Activated CD4-positive, alpha-beta memory T cell treated with anti-CD3 and anti-CD28 coated beads for 36 hours (primary cell): ENCODE measurements at regions of chr15 and their contacts with region 1.

Region 1: DNA sequence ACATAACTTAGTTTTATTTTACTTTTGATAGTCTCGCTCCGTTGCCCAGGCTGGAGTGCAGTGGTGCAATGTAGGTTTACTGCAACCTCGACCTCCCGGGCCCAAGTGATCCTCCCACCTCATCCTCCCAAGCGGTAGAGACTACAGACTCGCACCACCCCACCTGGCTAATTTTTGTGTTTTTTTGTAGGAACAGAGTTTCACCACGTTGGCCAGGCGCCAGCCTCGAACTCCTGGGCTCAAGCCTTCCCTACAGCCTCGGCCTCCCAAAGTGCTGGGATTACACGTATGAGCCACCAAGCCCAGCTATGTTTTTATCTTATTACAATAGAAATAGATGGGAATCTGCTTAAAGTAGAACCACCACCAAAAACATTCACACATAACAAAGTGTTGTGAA is 2.9 kb downstream of the RNU5A-1 start:
- DNase-seq: no peak
- H3K4me3 Mint-ChIP-seq: peak overlapping the region; percentile 60
- H3K27ac Mint-ChIP-seq: peak overlapping the region; percentile 81
- H3K4me1 Mint-ChIP-seq: peaks cover 25% of the 10 kb centered on the region
- H3K27me3 Mint-ChIP-seq: peaks cover 5% of the 10 kb centered on the region

Region 2: DNA sequence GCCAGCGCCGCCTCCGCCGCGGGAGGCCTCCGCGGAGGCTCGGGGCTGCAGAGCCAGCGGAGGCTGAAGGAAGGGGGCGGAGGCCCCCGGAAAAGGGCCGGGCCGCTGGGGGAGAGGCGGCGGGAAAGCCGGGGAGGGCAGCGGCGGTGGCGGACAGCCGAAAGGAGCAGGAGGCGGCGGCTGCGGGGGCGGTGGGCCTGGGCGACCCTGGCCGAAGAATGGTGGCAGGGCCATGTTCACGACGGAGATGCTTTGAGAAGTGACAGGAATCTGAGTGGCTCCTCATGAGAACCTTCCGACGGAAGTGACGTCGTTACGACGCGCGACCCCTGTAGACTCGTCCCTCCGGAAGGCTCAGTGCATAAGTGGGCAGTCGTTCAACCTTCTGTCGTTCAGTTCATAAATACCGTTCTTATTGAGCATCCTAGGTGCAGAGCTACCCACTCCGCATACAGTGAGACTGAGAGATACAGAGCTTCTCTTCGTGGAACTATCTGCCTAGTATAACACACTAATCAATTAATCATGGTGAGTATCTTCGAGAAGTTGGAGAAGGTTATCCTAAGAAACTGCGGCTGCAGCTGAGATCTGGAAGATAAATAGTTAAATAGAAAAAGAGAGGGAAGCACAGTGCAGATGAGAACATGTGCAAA is 165.1 kb before region 1 on chr15 and contains the start of gene PDCD7:
- CTCF ChIA-PET with region 1: interaction called, 4 read pairs
- POLR2A ChIA-PET with region 1: no interaction called
- intact Hi-C with region 1: loop called (anchors 5 kb)
- DNase-seq: peak; percentile 91
- H3K4me3 Mint-ChIP-seq: peak within 1 kb of the TSS; percentile 98
- H3K27ac Mint-ChIP-seq: peak within 1 kb of the TSS; percentile 95
- H3K4me1 Mint-ChIP-seq: peaks cover 28% of the 10 kb centered on the region
- H3K27me3 Mint-ChIP-seq: no peaks in the 10 kb centered on the region
- total RNA-seq, gene PDCD7: 32.8 to 33.0 TPM

Region 3: GRCh38 chr15:65264863-65265430 is 33.8 kb before region 1 on chr15:
- CTCF ChIA-PET with region 1: no interaction called
- POLR2A ChIA-PET with region 1: no interaction called
- intact Hi-C with region 1: no loop called
- DNase-seq: no peak
- H3K4me3 Mint-ChIP-seq: no peak overlapping the region
- H3K27ac Mint-ChIP-seq: no peak overlapping the region
- H3K4me1 Mint-ChIP-seq: no peaks in the 10 kb centered on the region
- H3K27me3 Mint-ChIP-seq: no peaks in the 10 kb centered on the region

Region 4: DNA sequence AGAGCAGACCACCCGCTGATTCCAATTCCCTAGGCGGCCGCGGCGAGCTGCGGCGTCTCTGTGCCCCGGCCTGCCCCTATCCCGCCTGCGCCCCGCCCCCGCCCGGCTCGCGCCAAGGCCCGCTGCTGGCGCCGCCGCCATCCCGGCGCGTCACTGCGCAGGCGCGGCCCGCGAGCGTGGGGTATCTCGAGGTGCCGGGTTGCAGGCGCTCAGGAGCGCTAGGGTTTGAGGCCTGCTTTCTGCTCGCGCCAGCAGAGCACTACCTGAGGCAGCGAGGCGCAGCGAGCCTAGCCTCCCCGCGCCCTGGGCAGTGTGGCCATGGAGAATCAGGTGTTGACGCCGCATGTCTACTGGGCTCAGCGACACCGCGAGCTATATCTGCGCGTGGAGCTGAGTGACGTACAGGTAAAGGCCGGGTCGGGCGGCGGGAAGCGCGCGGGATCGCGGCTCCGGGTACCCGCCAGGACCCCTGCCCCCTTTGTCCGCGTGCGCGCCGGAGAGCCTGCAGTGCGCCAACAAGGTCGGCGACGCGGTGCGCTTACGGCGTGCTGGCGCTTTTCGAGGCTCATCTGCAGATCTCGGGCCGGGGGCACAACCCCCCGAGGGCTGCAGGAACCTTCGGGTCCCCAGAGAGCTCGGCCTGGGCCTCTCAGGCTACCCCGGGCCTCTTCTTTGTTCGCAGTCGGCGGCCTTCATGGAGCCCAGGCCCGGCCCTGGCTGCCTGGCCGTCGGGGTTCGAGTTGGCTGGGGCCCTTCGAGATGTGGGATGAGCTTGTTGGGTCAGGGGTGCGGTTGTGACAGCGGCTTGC is 231.8 kb after region 1 on chr15 and contains the start of gene HACD3:
- CTCF ChIA-PET with region 1: no interaction called
- POLR2A ChIA-PET with region 1: no interaction called
- intact Hi-C with region 1: no loop called
- DNase-seq: peak; percentile 91
- H3K4me3 Mint-ChIP-seq: peak within 1 kb of the TSS; percentile 83
- H3K27ac Mint-ChIP-seq: peak within 1 kb of the TSS; percentile 77
- H3K4me1 Mint-ChIP-seq: peaks cover 29% of the 10 kb centered on the region
- H3K27me3 Mint-ChIP-seq: no peaks in the 10 kb centered on the region
- total RNA-seq, gene HACD3: 26.1 to 29.1 TPM